HEK293T (cell line): ENCODE measurements at regions of chr11 and their contacts with region 1.

Region 1: DNA sequence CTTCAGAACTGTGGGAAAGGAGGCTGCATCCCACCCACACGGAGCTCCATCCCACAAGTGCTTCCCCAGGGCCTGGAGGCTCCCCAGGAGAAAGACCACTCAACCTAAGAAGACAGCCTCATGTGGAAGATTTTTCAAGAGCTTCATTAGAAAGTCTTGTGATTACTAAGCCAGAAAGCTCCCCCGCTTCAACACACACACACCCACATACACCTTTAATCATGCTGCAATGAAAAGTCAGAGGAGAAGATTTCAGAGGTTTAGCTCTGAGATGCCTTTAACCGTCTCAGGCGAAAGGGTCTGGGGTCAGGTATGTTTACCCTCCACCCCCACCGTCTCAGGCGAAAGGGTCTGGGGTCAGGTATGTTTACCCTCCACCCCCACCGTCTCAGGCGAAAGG is 634.5 kb upstream of the B3GAT1 start:
- DNase-seq: no peak

Region 2: DNA sequence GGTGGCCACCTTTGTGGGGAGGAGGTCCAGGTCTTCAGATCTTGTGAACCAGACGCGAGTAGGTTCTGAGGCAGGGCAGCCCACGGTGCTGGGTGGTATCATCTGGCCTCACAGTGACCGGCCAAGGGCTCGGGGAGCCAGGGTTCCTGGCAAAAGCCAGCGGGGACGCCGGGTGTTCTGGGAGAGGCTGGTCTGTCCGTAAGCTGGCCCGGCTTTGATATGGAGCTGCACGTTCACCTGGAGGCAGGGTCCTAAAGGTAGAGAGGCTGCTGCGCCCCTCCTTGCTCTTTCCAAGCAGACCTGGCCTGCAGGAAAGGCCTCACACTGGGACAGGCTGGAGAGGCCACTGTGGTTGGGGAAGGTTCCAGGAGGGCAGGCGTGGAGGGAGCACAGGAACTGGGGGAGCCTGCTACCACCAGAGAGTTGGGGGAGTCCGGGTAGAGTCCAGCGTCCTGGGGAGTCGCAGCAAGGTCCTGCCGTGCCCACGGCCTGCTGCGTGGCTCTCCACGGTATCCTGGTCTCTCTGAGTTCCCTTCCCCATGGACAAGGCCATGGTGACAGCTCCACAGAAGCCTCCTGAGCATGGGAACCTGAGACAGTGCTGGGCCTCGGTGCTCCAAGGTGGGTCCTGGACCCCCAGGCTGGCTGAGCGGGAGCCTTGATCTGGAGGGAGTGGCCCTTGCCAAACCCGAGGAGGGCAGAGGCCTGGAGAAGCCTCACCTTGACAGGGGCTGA is 182.2 kb before region 1 on chr11:
- CTCF ChIA-PET with region 1: interaction called, 10 read pairs
- POLR2A ChIA-PET with region 1: no interaction called
- DNase-seq: no peak

Region 3: GRCh38 chr11:135062994-135063393 is 16.4 kb after region 1 on chr11:
- CTCF ChIA-PET with region 1: no interaction called
- POLR2A ChIA-PET with region 1: no interaction called
- DNase-seq: no peak